ENCODE measurements at regions of chr11 and their contacts with region 1.

Region 1: GRCh38 chr11:134866981-134867675 is 455.1 kb upstream of the B3GAT1 start:
- DNase-seq: no peak
- ATAC-seq: no peak
- H3K4me3 ChIP-seq: no peak overlapping the region
- H3K27ac ChIP-seq: no peak overlapping the region
- H3K4me1 ChIP-seq: no peaks in the 10 kb centered on the region
- H3K27me3 ChIP-seq: peaks cover 0 to 4% of the 10 kb centered on the region in 2 experiments; a peak in 1 of 5 replicates
- CTCF ChIP-seq: no peak
- EP300 ChIP-seq: no peak
- POLR2A ChIP-seq: no peak
- RAD21 ChIP-seq: no peak

Region 2: GRCh38 chr11:134921938-134922337 is 54.8 kb after region 1 on chr11:
- CTCF ChIA-PET with region 1: no interaction called
- POLR2A ChIA-PET with region 1: no interaction called
- in situ Hi-C with region 1: no loop called
- intact Hi-C with region 1: no loop called
- DNase-seq: no peak
- ATAC-seq: no peak
- H3K4me3 ChIP-seq: no peak overlapping the region
- H3K27ac ChIP-seq: no peak overlapping the region
- H3K4me1 ChIP-seq: no peaks in the 10 kb centered on the region
- H3K27me3 ChIP-seq: no peaks in the 10 kb centered on the region
- CTCF ChIP-seq: no peak
- EP300 ChIP-seq: no peak
- POLR2A ChIP-seq: no peak
- RAD21 ChIP-seq: no peak

Region 3: GRCh38 chr11:134939905-134940304 is 72.8 kb after region 1 on chr11:
- CTCF ChIA-PET with region 1: no interaction called
- POLR2A ChIA-PET with region 1: no interaction called
- in situ Hi-C with region 1: no loop called
- intact Hi-C with region 1: loop called (anchors 5 kb)
- DNase-seq: peak in 3 of 4 experiments; percentile 13 to 24 (median 15)
- ATAC-seq: peak; percentile 77
- H3K4me3 ChIP-seq: no peak overlapping the region
- H3K27ac ChIP-seq: no peak overlapping the region
- H3K4me1 ChIP-seq: no peaks in the 10 kb centered on the region
- H3K27me3 ChIP-seq: peaks cover 0 to 23% of the 10 kb centered on the region in 2 experiments; a peak in 1 of 5 replicates
- CTCF ChIP-seq: peak; percentile 29 to 49 (median 35); a peak in 4 of 6 replicates
- EP300 ChIP-seq: no peak
- POLR2A ChIP-seq: no peak
- RAD21 ChIP-seq: peak; percentile 26 to 42; a peak in 3 of 4 replicates

Measured in K562 (cell line).